GM12878 (cell line): ENCODE measurements at regions of chr10 and their contacts with region 1.

Region 1: DNA sequence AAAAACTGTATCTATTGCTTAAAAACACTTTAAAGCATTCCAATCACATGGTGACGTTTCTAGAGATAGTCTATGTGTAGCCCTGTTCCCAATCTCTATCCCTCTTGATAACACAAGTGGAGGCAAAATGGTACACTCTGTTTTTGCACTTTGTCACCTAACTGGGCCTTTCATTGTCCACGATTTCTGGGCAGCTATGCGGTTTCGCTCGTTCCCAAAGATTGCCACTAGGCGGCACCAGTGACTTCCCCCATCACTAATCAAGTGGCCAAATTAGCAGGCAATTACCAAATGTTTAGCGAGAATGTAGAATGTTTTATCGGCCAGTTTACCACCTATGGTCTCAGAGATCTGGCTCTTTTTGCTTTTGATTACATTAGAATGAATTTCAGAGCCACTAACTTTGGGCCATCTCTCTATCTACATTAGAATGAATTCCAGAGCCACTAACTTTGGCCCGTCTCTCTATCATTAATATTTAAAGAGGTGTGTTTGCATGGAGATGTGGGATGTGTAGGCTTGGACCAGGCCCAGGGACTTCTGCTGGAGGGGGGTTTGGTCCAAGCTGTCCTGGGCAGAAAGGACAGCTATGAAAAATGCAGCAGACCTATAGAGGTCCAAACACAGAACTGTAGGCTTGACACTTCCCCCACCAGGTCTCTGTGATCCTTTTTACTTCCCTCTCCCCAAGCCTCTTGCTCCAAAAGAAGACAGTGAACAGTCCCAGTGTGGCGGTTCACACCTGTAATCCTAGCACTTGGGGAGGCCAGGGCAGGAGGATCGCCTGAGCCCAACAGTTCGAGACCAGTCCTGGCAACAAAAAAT is 90.1 kb downstream of the EPC1 start:
- DNase-seq: peak; percentile 46
- ATAC-seq: peak; percentile 91
- H3K4me3 ChIP-seq: no peak overlapping the region
- H3K27ac ChIP-seq: no peak overlapping the region
- H3K4me1 ChIP-seq: no peaks in the 10 kb centered on the region; the same call in 1 of the 2 replicates
- H3K27me3 ChIP-seq: no peaks in the 10 kb centered on the region
- CTCF ChIP-seq: peak; percentile 93 to 96 (median 94); a peak in 5 of 6 replicates
- EP300 ChIP-seq: no peak
- POLR2A ChIP-seq: no peak
- RAD21 ChIP-seq: peak; percentile 88

Region 2: DNA sequence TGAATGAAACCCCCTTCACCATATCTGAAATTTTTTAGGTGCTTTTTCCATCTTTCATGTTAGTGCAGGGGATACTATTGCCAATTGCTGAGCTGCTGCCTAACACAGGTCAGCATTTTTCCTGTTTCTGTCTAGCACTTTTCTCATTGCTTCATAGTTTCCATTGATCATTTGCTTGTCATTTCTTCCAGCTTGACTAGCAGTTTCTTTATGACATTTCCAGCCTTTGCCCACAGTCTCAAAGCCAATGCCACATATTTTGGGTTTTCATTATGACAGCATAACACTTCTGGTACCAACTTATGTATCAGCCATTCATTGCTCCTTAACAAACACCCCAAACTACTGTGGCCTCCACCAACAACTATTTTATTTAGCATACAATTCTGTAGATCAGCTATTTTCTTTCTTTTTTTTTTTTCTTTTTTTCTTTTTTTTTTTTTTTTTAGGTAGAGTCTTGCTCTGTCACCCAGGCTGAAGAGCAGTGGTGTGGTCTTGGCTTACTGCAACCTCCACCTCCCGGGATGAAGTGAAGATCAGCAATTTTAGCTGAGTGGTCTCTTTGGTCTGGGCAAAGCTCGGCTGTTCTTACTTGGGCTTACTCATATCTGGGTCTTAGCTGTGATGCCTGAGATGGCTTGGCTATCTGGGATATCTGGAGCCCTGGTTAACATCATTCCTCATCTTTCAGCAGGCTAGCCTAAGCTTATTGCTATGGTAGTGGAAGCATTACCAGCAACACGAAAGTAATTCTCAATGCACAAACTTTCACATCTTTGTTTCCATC is 12.2 kb before region 1 on chr10:
- CTCF ChIA-PET with region 1: interaction called, 19 read pairs
- POLR2A ChIA-PET with region 1: interaction called, 3 read pairs
- RAD21 ChIA-PET with region 1: interaction called, 5 read pairs
- SMC1A ChIA-PET with region 1: interaction called, 14 read pairs
- in situ Hi-C with region 1: no loop called
- intact Hi-C with region 1: no loop called
- DNase-seq: no peak
- ATAC-seq: peak; percentile 82
- H3K4me3 ChIP-seq: no peak overlapping the region
- H3K27ac ChIP-seq: no peak overlapping the region
- H3K4me1 ChIP-seq: no peaks in the 10 kb centered on the region
- H3K27me3 ChIP-seq: no peaks in the 10 kb centered on the region
- CTCF ChIP-seq: no peak
- EP300 ChIP-seq: no peak
- POLR2A ChIP-seq: no peak
- RAD21 ChIP-seq: no peak

Region 3: GRCh38 chr10:32338262-32338661 is 81.4 kb after region 1 on chr10:
- CTCF ChIA-PET with region 1: interaction called, 79 read pairs
- POLR2A ChIA-PET with region 1: interaction called, 7 read pairs
- RAD21 ChIA-PET with region 1: interaction called, 30 read pairs
- SMC1A ChIA-PET with region 1: interaction called, 19 read pairs
- in situ Hi-C with region 1: loop called (anchors 10 kb)
- intact Hi-C with region 1: no loop called
- DNase-seq: no peak
- ATAC-seq: no peak
- H3K4me3 ChIP-seq: no peak overlapping the region
- H3K27ac ChIP-seq: no peak overlapping the region
- H3K4me1 ChIP-seq: peaks cover 16% of the 10 kb centered on the region
- H3K27me3 ChIP-seq: no peaks in the 10 kb centered on the region
- CTCF ChIP-seq: no peak
- EP300 ChIP-seq: no peak
- POLR2A ChIP-seq: no peak
- RAD21 ChIP-seq: no peak

Region 4: GRCh38 chr10:32362571-32362970 is 105.7 kb after region 1 on chr10:
- CTCF ChIA-PET with region 1: interaction called, 82 read pairs
- POLR2A ChIA-PET with region 1: interaction called, 4 read pairs
- RAD21 ChIA-PET with region 1: interaction called, 8 read pairs
- SMC1A ChIA-PET with region 1: interaction called, 19 read pairs
- in situ Hi-C with region 1: no loop called
- intact Hi-C with region 1: loop called (anchors 1 kb)
- DNase-seq: no peak
- ATAC-seq: no peak
- H3K4me3 ChIP-seq: no peak overlapping the region
- H3K27ac ChIP-seq: no peak overlapping the region
- H3K4me1 ChIP-seq: no peaks in the 10 kb centered on the region
- H3K27me3 ChIP-seq: no peaks in the 10 kb centered on the region
- CTCF ChIP-seq: no peak
- EP300 ChIP-seq: no peak
- POLR2A ChIP-seq: no peak
- RAD21 ChIP-seq: no peak

Region 5: GRCh38 chr10:32367793-32368453 is 111.1 kb after region 1 on chr10:
- CTCF ChIA-PET with region 1: interaction called, 82 read pairs
- POLR2A ChIA-PET with region 1: interaction called, 4 read pairs
- RAD21 ChIA-PET with region 1: interaction called, 8 read pairs
- SMC1A ChIA-PET with region 1: interaction called, 19 read pairs
- in situ Hi-C with region 1: loop called (anchors 10 kb)
- intact Hi-C with region 1: loop called (anchors 1 kb)
- DNase-seq: no peak
- ATAC-seq: peak; percentile 65
- H3K4me3 ChIP-seq: no peak overlapping the region
- H3K27ac ChIP-seq: no peak overlapping the region
- H3K4me1 ChIP-seq: no peaks in the 10 kb centered on the region
- H3K27me3 ChIP-seq: no peaks in the 10 kb centered on the region
- CTCF ChIP-seq: peak; percentile 61 to 80 (median 69)
- EP300 ChIP-seq: no peak
- POLR2A ChIP-seq: no peak
- RAD21 ChIP-seq: peak; percentile 75

Region 6: DNA sequence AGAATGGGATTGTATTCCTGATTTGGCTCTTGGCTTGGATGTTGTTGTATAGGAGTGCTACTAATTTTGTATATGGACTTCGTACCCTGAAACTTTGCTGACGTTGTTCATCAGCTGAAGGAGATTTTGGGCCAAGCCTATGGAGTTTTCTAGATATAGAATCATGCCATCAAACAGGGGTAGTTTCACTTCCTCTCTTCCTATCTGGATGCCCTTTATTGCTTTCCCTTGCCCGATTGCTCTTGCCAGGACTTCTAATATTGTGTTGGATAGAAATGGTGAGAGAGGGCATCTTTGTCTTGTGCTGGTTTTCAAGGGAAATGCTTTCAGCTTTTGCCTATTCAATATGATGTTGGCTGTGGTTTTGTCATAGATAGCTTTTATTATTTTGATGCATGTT is 281.4 kb after region 1 on chr10:
- CTCF ChIA-PET with region 1: no interaction called
- POLR2A ChIA-PET with region 1: no interaction called
- RAD21 ChIA-PET with region 1: no interaction called
- SMC1A ChIA-PET with region 1: no interaction called
- in situ Hi-C with region 1: no loop called
- intact Hi-C with region 1: no loop called
- DNase-seq: no peak
- ATAC-seq: no peak
- H3K4me3 ChIP-seq: no peak overlapping the region
- H3K27ac ChIP-seq: no peak overlapping the region
- H3K4me1 ChIP-seq: no peaks in the 10 kb centered on the region
- H3K27me3 ChIP-seq: no peaks in the 10 kb centered on the region
- CTCF ChIP-seq: no peak
- EP300 ChIP-seq: no peak
- POLR2A ChIP-seq: no peak
- RAD21 ChIP-seq: no peak